Motor neuron (in vitro differentiated cells): ENCODE measurements at regions of chr20 and their contacts with region 1.

Region 1: DNA sequence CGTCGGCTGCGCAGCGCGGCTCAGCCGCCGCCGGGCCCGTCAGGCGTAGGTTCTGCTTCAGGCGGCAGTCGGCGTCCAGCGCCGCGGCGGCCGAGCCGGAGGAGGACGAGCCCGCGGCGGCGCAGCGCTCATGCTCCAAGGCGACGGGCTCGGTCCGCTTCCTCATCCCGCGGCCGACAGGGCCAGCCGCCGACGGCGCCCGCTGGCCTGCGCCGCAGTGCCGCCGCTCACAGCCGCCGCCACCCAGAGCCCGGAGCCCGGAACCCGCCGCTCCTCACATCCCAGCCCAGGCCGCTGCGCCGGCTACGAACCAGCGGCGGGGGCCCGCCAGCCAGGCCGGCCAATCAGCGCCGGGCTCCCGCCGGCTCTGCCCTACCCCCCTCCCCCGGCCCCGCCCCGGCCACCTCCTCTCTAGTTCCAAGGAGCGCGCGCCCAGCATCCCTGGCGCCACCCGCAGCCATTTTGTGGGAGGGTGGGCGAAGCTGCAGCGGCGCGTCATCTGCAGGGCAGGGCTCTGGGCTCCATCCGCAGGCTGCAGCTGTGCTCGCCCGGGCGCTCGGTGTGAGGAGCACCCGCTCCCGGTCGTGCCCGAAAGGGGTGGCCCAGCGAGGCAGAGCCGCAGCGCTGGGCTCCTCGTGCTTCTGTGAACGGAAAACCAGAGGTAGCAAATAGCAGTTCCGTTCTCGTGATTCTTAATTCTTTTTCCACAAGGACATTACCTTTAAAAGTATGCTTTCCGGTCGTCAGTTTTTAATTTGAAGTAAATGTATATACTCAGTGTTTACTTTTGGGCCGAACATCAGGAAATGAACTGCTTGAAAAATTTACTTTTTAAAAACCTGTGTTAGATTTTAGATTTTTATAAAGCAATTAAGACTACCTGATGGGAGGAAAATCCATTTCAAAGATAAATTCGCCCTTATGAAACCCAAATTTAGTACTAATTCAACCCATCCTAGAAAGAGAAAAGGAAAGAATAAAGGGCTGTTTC is at the start of gene ABHD12:
- ATAC-seq: peak; percentile 88 to 93 (median 91)
- H3K4me3 ChIP-seq: peak within 1 kb of the TSS; percentile 51 to 99 (median 66)
- H3K27ac ChIP-seq: peak within 1 kb of the TSS; percentile 85 to 92
- H3K4me1 ChIP-seq: peaks cover 0 to 6% of the 10 kb centered on the region in 2 donors
- total RNA-seq, gene ABHD12: 23.2 to 79.9 (median 29.6) TPM

Region 2: GRCh38 chr20:25065625-25066338 is 325.1 kb before region 1 on chr20:
- in situ Hi-C with region 1: loop called in 1 of 9 experiments (anchors 25 kb)
- ATAC-seq: peak; percentile 59 to 82 (median 73)
- H3K4me3 ChIP-seq: no peak overlapping the region
- H3K27ac ChIP-seq: no peak overlapping the region
- H3K4me1 ChIP-seq: no peaks in the 10 kb centered on the region

Region 3: DNA sequence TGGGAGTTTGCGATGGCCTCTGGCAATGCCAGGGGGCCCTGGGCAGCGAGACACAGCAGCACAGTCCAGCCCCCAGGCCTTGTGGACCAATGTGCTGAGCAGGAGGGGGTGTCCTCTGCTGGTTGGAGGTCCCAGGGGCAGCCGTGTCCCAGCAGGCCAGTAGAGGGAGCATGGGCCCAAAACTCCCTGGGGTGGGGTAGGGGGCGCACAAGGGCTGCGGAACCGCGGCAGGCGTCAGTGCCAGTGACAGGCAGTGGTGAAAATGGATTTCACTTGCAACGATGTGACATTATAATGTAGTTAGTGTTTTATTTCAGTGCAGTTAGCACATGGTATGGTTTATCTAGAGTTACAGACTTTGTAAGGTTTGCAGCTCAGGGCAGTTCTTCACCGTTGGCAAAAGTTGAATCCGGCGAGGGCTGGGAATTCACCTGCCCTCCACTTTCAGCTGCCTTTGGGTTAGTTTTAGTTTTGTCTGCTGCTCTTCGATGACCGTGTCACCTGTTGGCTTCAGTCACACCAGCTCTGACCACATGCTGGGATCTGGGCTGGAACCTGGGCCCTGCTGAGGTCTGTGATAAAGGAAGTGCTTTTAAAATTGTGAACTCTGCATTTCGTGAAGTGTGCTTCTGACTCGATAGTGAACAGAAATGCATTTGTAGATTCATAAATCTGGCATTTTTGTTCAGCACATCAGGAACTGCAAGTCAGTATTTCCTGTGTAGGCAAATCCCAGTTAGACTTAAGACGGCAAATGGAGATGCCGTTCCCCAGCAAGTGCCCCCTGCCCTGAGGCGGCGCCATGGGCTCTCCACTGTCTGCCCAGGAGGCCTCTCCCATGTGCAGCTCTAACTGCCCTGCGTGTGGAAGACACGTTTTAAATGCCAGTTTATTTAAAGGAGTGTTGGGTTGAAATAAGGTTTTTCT is 96.1 kb before region 1 on chr20:
- in situ Hi-C with region 1: loop called in 1 of 9 experiments (anchors 25 kb)
- ATAC-seq: peak; percentile 4 to 76 (median 55)
- H3K4me3 ChIP-seq: no peak overlapping the region
- H3K27ac ChIP-seq: no peak overlapping the region
- H3K4me1 ChIP-seq: no peaks in the 10 kb centered on the region

Region 4: DNA sequence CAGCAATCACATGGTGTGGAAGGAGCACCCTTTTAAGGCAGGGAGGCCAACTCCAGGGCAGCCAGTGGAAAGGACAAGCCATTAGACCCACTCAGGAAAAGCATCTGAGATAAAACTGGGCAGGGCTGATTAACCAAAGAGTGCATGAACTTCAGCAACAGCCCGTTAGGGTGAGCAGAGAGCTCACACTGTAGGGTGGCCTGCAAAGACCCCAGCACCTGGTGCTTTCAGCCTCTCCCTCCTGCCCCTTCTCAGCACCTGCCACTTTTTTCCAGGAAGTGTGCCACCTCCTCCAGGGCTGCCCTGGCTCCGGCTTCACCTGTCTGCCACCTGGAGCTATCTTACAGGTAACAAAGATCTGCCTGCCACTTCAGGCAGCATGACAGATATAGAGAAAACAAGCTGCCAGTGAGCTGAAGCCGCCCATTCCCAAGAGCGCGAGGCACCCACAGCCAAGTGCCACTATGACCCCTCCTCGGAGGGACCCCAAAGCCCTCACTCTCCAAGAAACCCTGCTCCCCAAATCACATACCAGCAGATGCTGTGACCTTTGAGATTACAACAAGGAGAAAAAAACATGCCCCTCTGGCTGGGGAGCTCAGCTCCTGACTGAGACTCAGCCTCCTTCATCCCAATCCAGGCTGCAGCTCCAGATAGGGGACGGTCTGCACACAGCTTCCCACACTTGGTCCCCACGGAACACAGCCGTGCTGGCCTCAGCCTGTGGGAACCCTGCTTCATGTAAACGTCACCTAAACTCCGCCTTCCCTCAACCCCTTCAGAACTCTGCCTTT is 71.4 kb before region 1 on chr20:
- in situ Hi-C with region 1: loop called in 1 of 9 experiments (anchors 10 kb)
- ATAC-seq: no peak
- H3K4me3 ChIP-seq: no peak overlapping the region
- H3K27ac ChIP-seq: no peak overlapping the region
- H3K4me1 ChIP-seq: no peaks in the 10 kb centered on the region

Region 5: GRCh38 chr20:25632940-25633790 is 242.3 kb after region 1 on chr20:
- in situ Hi-C with region 1: no loop called
- ATAC-seq: peak in 3 of 8 experiments; percentile 96 to 98 (median 97)
- H3K4me3 ChIP-seq: no peak overlapping the region
- H3K27ac ChIP-seq: no peak overlapping the region
- H3K4me1 ChIP-seq: no peaks in the 10 kb centered on the region